Activated B cell treated with CpG ODN at 0.5 μM for 24 hours (primary cell): ENCODE measurements at regions of chr17 and their contacts with region 1.

Region 1: DNA sequence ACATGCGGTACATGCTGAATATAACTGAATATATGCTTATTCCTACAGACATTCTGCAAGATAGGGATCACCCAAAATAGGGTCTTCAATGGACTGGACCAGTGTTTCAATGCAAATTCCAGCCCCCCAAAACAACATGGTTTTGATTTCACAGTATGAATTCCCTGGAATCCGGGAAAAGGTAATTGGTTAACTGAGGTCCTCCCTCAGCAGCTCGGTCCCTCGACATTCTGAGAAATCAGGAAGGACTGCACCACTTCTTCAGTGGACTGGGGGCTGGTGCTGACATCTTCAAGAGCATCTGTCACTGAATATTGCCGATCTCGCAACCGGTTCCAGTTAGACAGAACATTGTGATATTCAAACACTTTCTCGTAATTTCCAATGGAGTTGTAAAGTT is 25.1 kb downstream of the CHCT1 start:
- DNase-seq: no peak
- ATAC-seq: no peak
- H3K4me3 Mint-ChIP-seq: no peak overlapping the region
- H3K27ac Mint-ChIP-seq: no peak overlapping the region
- H3K4me1 Mint-ChIP-seq: no peaks in the 10 kb centered on the region
- H3K27me3 Mint-ChIP-seq: no peaks in the 10 kb centered on the region
- CTCF ChIP-seq: no peak

Region 2: DNA sequence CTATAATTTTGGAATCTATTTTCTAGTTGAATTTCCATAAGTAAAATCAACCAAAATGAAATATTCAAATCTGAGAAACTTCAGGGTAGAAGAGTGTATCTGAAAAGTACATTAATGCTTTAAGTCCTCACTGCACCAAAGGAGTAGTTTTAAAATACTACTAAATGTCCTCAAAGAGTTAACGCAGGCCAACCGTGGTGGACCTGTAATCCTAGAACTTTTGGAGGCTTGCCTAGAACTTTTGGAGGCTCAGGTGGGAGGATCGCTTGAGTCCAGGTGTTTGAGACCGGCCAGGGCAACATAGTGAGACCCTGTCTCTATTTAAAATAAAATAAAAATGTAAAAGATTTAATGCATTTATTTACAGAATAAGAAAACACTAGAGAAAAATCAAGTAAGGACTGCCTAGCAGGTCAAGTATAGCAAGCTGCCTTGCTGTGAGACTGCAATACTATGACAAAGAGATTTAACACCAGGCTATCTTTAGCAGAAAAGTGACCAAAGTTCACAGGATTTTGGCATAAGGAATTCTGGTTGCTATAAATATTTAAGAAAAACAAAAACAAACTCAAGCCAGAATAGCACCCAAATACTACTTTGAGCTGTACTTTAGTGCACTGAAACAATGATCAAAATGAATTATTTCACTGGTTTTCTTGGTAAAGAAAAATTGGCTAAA is 15.9 kb after region 1 on chr17:
- CTCF ChIA-PET with region 1: no interaction called
- POLR2A ChIA-PET with region 1: interaction called, 11 read pairs
- intact Hi-C with region 1: no loop called
- DNase-seq: no peak
- ATAC-seq: no peak
- H3K4me3 Mint-ChIP-seq: no peak overlapping the region
- H3K27ac Mint-ChIP-seq: no peak overlapping the region
- H3K4me1 Mint-ChIP-seq: no peaks in the 10 kb centered on the region
- H3K27me3 Mint-ChIP-seq: no peaks in the 10 kb centered on the region
- CTCF ChIP-seq: no peak